ENCODE measurements at regions of chr2 and their contacts with region 1.

Region 1: DNA sequence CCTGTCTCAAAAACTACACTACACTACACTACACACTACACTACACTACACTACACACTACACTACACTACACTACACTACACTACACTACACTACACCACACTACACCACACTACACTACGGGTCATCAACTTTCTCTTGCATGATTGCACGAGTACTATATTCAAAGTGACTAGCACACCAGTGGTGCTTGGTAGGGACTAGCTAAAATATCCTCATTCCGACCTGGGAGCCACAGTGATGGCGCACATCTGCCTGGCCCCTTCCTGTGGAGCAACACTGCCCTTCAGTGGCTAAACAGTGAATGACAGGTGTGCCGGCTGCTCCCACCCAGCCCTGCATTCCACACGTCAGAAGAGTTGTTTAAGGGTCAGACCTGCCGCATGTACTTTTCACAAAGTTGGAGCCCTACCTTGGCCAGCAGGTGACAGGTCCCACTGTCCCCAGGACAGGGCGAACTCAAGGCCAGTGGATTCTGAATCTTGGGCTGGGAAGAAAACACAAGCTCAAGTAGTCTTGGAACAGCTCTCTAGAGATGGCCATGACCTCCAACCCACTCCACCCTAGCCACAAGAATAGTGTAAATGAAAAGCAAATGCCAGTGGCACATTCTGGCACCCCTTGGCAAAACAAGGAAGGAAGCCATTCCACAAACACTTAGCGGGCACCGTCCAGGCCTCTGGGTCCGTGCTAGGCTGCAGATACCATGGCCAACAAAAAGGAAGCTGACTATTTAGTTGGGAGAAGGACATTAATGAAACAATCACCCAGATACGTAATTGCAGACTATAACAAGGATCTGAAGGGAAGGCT is 79.7 kb upstream of the MSH2 start:
- DNase-seq: peak; percentile 66
- ATAC-seq: peak; percentile 97
- H3K4me3 ChIP-seq: no peak overlapping the region
- H3K27ac ChIP-seq: no peak overlapping the region
- H3K4me1 ChIP-seq: peaks cover 5% of the 10 kb centered on the region
- H3K27me3 ChIP-seq: no peaks in the 10 kb centered on the region
- CTCF ChIP-seq: peak; percentile 98 to 99 (median 98); a peak in 5 of 6 replicates
- EP300 ChIP-seq: no peak
- POLR2A ChIP-seq: no peak
- RAD21 ChIP-seq: peak; percentile 100

Region 2: DNA sequence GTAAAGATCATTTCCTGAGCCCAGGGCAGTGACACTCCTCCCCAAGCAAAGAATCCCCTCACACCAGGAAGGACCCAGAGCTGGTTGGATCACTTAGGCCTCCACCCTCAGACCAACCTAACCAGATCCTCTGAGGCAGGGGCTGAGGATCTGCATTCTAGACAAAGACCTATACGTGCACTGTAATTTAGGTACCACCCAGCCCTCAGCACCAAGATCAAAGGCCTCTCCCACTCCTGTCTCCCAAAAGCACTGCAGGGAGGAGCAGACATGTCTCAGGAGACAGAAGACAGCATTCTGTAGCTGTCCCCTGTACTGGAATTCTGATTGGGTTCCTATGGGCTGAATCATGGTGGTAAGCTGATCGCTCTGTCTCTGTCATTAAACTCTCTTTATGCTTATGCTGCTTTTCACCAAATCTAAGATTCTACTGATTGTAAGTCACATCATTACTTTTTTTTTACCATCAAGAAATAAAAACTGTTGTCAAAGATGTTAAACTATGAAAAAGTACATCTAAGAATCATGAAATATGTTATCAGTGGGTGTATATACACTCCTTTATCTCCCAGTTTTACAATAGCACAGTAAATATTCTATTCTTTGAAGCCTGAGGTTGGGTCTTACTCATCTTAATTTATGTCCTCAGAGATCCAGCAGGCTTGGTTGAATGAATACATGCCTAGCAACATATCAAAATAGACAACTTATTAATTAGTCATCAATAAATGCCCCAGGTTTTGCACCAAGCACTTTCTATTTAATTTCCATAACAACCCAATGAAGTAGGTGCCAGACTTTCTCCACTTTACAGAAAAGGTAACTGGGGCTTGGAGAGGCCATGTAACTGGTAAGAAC is 436.0 kb before region 1 on chr2:
- CTCF ChIA-PET with region 1: interaction called, 14 read pairs
- POLR2A ChIA-PET with region 1: no interaction called
- RAD21 ChIA-PET with region 1: no interaction called
- SMC1A ChIA-PET with region 1: no interaction called
- in situ Hi-C with region 1: no loop called
- intact Hi-C with region 1: no loop called
- DNase-seq: no peak
- ATAC-seq: no peak
- H3K4me3 ChIP-seq: no peak overlapping the region
- H3K27ac ChIP-seq: no peak overlapping the region
- H3K4me1 ChIP-seq: no peaks in the 10 kb centered on the region
- H3K27me3 ChIP-seq: no peaks in the 10 kb centered on the region; a peak in 1 of 4 replicates
- CTCF ChIP-seq: no peak
- EP300 ChIP-seq: no peak
- POLR2A ChIP-seq: no peak
- RAD21 ChIP-seq: no peak

Region 3: GRCh38 chr2:46984642-46985476 is 338.4 kb before region 1 on chr2:
- CTCF ChIA-PET with region 1: no interaction called
- POLR2A ChIA-PET with region 1: interaction called, 6 read pairs
- RAD21 ChIA-PET with region 1: no interaction called
- SMC1A ChIA-PET with region 1: no interaction called
- in situ Hi-C with region 1: loop called (anchors 5 kb)
- intact Hi-C with region 1: no loop called
- DNase-seq: peak; percentile 79
- ATAC-seq: peak; percentile 63
- H3K4me3 ChIP-seq: peak overlapping the region; percentile 37; the same call in 1 of the 2 replicates
- H3K27ac ChIP-seq: peak overlapping the region; percentile 89
- H3K4me1 ChIP-seq: peaks cover 58% of the 10 kb centered on the region
- H3K27me3 ChIP-seq: no peaks in the 10 kb centered on the region
- CTCF ChIP-seq: no peak
- EP300 ChIP-seq: peak; percentile 25 to 49; a peak in 2 of 4 replicates
- POLR2A ChIP-seq: peak; percentile 68
- RAD21 ChIP-seq: no peak

Region 4: GRCh38 chr2:47070920-47071824 is 252.0 kb before region 1 on chr2:
- CTCF ChIA-PET with region 1: interaction called, 3 read pairs
- POLR2A ChIA-PET with region 1: no interaction called
- RAD21 ChIA-PET with region 1: interaction called, 15 read pairs
- SMC1A ChIA-PET with region 1: no interaction called
- in situ Hi-C with region 1: no loop called
- intact Hi-C with region 1: loop called (anchors 5 kb)
- DNase-seq: peak; percentile 86
- ATAC-seq: peak; percentile 88
- H3K4me3 ChIP-seq: no peak overlapping the region
- H3K27ac ChIP-seq: peak overlapping the region; percentile 6; the same call in 1 of the 2 replicates
- H3K4me1 ChIP-seq: peaks cover 30% of the 10 kb centered on the region
- H3K27me3 ChIP-seq: no peaks in the 10 kb centered on the region
- CTCF ChIP-seq: no peak
- EP300 ChIP-seq: peak; percentile 23 to 63; a peak in 3 of 4 replicates
- POLR2A ChIP-seq: no peak
- RAD21 ChIP-seq: no peak

Region 5: GRCh38 chr2:47272031-47272864 is 51.0 kb before region 1 on chr2:
- CTCF ChIA-PET with region 1: interaction called, 43 read pairs
- POLR2A ChIA-PET with region 1: interaction called, 3 read pairs
- RAD21 ChIA-PET with region 1: interaction called, 24 read pairs
- SMC1A ChIA-PET with region 1: interaction called, 20 read pairs
- in situ Hi-C with region 1: no loop called
- intact Hi-C with region 1: no loop called
- DNase-seq: no peak
- ATAC-seq: peak; percentile 97
- H3K4me3 ChIP-seq: peak overlapping the region; percentile 71
- H3K27ac ChIP-seq: peak overlapping the region; percentile 20; the same call in 1 of the 2 replicates
- H3K4me1 ChIP-seq: peaks cover 18% of the 10 kb centered on the region
- H3K27me3 ChIP-seq: no peaks in the 10 kb centered on the region
- CTCF ChIP-seq: peak; percentile 84 to 98 (median 92)
- EP300 ChIP-seq: no peak
- POLR2A ChIP-seq: peak; percentile 74
- RAD21 ChIP-seq: peak; percentile 52

Region 6: DNA sequence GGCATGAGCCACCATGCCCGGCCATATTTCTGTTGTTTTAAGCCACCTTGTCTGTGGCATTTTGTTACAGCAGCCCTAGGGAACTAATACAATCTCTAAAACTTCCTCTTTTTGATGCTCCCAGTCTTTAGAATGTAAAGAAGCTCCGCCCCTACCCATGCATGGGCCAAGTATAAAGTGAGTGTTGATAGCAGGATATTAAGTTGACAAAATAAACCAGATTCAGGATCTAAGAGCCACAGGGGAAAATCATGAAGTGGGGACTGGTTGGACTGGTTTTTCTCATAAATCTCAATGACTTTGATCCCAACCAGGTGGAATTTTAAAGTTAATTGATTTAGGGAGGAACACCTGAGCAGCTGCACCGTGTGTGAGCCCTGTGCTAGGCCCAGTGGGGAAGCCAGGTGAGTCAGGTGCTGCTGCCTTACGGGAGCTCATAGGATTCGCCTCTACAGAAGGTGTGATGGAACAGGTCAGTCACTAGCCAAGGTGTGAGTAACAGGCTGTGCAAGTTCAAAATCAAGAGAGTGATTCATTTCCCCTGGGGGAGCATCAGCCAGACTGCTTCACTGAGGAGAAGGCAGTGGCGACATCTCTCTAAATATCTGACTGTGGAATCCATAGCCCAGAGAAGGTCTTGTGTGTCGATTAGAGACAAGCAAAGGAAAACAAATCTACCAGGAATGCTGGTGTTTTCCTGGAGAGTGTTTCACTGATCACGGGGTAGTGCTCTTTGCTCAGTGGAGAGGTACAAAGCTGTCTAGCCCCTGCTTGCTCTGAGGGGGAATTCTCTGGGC is 16.7 kb after region 1 on chr2:
- CTCF ChIA-PET with region 1: interaction called, 31 read pairs
- POLR2A ChIA-PET with region 1: interaction called, 5 read pairs
- RAD21 ChIA-PET with region 1: interaction called, 18 read pairs
- SMC1A ChIA-PET with region 1: interaction called, 67 read pairs
- in situ Hi-C with region 1: no loop called
- intact Hi-C with region 1: no loop called
- DNase-seq: no peak
- ATAC-seq: no peak
- H3K4me3 ChIP-seq: no peak overlapping the region
- H3K27ac ChIP-seq: no peak overlapping the region
- H3K4me1 ChIP-seq: peaks cover 18% of the 10 kb centered on the region
- H3K27me3 ChIP-seq: peaks cover 0 to under 1% of the 10 kb centered on the region in 2 experiments; a peak in 1 of 4 replicates
- CTCF ChIP-seq: no peak
- EP300 ChIP-seq: no peak
- POLR2A ChIP-seq: no peak
- RAD21 ChIP-seq: no peak

Measured in GM12878 (cell line).